Endothelial cell of umbilical vein (primary cell): ENCODE measurements at regions of chr7 and their contacts with region 1.

Region 1: GRCh38 chr7:137592232-137592896 is 248.8 kb upstream of the PTN start:
- DNase-seq: peak; percentile 85
- H3K4me3 ChIP-seq: no peak overlapping the region
- H3K27ac ChIP-seq: peak overlapping the region; percentile 83
- H3K4me1 ChIP-seq: peaks cover 10% of the 10 kb centered on the region
- H3K27me3 ChIP-seq: peaks cover 0 to 1% of the 10 kb centered on the region in 2 experiments
- CTCF ChIP-seq: peak; percentile 64 to 90
- POLR2A ChIP-seq: no peak

Region 2: GRCh38 chr7:136114966-136115762 is 1477.2 kb before region 1 on chr7:
- CTCF ChIA-PET with region 1: interaction called, 53 read pairs
- POLR2A ChIA-PET with region 1: no interaction called
- dilution Hi-C with region 1: no loop called
- intact Hi-C with region 1: no loop called
- DNase-seq: peak; percentile 39
- H3K4me3 ChIP-seq: no peak overlapping the region
- H3K27ac ChIP-seq: no peak overlapping the region
- H3K4me1 ChIP-seq: no peaks in the 10 kb centered on the region
- H3K27me3 ChIP-seq: no peaks in the 10 kb centered on the region
- CTCF ChIP-seq: peak; percentile 74 to 78
- POLR2A ChIP-seq: no peak

Region 3: DNA sequence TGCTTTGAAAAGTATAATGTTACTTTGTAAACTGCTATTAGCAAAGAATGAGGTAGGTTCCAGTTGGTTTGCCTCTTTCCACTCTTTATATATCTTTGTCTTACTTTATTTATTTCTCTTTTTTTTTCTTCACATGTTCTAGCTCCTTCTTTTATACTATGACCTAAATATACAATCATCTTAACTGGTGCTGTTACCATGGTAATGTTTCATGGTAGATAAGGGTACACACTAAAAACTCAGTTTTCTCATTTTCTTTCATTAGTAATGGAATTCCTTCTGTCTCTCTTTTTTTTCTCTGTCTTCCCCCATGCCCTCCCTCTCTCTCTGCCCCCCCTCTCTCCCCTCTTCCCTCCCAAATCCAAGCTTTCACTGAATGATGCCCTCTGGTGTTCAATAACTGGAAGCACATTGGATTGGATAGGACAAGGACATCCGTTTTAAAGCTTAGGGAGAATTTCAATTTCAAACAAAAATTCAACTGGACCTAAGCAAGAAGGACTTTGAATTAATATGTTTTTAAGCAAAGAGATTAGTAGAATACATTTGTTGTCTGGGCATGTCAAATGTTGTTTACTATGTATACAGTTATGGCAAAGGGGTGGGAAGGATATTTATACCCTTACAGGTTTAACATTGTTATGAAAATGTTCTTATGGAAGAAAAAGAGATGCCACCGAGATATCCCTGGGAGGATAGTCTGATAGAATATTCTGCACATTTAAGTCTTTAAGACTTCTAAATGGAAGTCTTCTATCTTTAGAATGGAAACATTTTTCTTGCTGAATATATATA is 717.9 kb before region 1 on chr7:
- CTCF ChIA-PET with region 1: interaction called, 16 read pairs
- POLR2A ChIA-PET with region 1: no interaction called
- dilution Hi-C with region 1: no loop called
- intact Hi-C with region 1: loop called (anchors 5 kb)
- DNase-seq: peak; percentile 28
- H3K4me3 ChIP-seq: no peak overlapping the region
- H3K27ac ChIP-seq: no peak overlapping the region
- H3K4me1 ChIP-seq: peaks cover 6% of the 10 kb centered on the region
- H3K27me3 ChIP-seq: peaks cover 39 to 56% of the 10 kb centered on the region in 2 experiments
- CTCF ChIP-seq: peak; percentile 28 to 53
- POLR2A ChIP-seq: no peak

Region 4: GRCh38 chr7:137091396-137091795 is 501.0 kb before region 1 on chr7:
- CTCF ChIA-PET with region 1: interaction called, 3 read pairs
- POLR2A ChIA-PET with region 1: no interaction called
- dilution Hi-C with region 1: no loop called
- intact Hi-C with region 1: loop called (anchors 1 kb)
- DNase-seq: peak; percentile 52
- H3K4me3 ChIP-seq: no peak overlapping the region
- H3K27ac ChIP-seq: no peak overlapping the region
- H3K4me1 ChIP-seq: no peaks in the 10 kb centered on the region
- H3K27me3 ChIP-seq: no peaks in the 10 kb centered on the region
- CTCF ChIP-seq: peak; percentile 41 to 62
- POLR2A ChIP-seq: no peak

Region 5: GRCh38 chr7:137209151-137209817 is 383.1 kb before region 1 on chr7:
- CTCF ChIA-PET with region 1: no interaction called
- POLR2A ChIA-PET with region 1: no interaction called
- dilution Hi-C with region 1: no loop called
- intact Hi-C with region 1: no loop called
- DNase-seq: no peak
- H3K4me3 ChIP-seq: no peak overlapping the region
- H3K27ac ChIP-seq: no peak overlapping the region
- H3K4me1 ChIP-seq: no peaks in the 10 kb centered on the region
- H3K27me3 ChIP-seq: no peaks in the 10 kb centered on the region
- CTCF ChIP-seq: no peak
- POLR2A ChIP-seq: no peak

Region 6: DNA sequence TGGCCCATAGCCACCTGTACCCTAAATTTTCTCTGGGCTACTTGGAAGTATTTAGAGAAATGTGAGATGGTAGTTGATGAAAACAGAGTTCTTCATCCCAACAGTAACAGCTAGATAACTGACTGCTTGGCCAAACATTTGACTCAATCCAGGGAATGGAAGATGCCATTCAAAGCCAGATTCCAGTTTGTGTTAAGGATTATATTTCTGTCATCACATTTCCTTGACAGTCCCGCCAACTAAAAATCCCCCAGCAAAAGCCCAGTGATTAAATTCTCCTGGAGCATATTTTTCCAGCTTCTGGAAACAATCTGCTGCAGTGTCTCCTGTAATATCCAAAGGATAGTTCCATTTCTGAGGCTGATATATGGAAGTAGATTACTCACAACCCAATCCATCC is 203.4 kb before region 1 on chr7:
- CTCF ChIA-PET with region 1: no interaction called
- POLR2A ChIA-PET with region 1: no interaction called
- dilution Hi-C with region 1: no loop called
- intact Hi-C with region 1: loop called (anchors 10 kb)
- DNase-seq: no peak
- H3K4me3 ChIP-seq: no peak overlapping the region
- H3K27ac ChIP-seq: no peak overlapping the region
- H3K4me1 ChIP-seq: no peaks in the 10 kb centered on the region
- H3K27me3 ChIP-seq: no peaks in the 10 kb centered on the region
- CTCF ChIP-seq: no peak
- POLR2A ChIP-seq: no peak

Region 7: GRCh38 chr7:137579913-137580640 is 12.3 kb before region 1 on chr7:
- CTCF ChIA-PET with region 1: interaction called, 57 read pairs
- POLR2A ChIA-PET with region 1: interaction called, 8 read pairs
- dilution Hi-C with region 1: no loop called
- intact Hi-C with region 1: loop called (anchors 1 kb)
- DNase-seq: peak; percentile 90
- H3K4me3 ChIP-seq: peak overlapping the region in 1 of 3 experiments; percentile 25
- H3K27ac ChIP-seq: peak overlapping the region; percentile 92
- H3K4me1 ChIP-seq: peaks cover 23% of the 10 kb centered on the region
- H3K27me3 ChIP-seq: no peaks in the 10 kb centered on the region
- CTCF ChIP-seq: no peak
- POLR2A ChIP-seq: no peak